K562 (cell line): ENCODE measurements at regions of chr7 and their contacts with region 1.

Region 1: GRCh38 chr7:11343818-11344413 is 370.2 kb downstream of the PHF14 start:
- DNase-seq: peak; percentile 26 to 56 (median 40)
- ATAC-seq: peak; percentile 48; the same call in 2 of the 3 replicates
- H3K4me3 ChIP-seq: no peak overlapping the region
- H3K27ac ChIP-seq: no peak overlapping the region
- H3K4me1 ChIP-seq: no peaks in the 10 kb centered on the region; a peak in 1 of 5 replicates
- H3K27me3 ChIP-seq: no peaks in the 10 kb centered on the region
- CTCF ChIP-seq: peak; percentile 48 to 82 (median 60); a peak in 4 of 6 replicates
- EP300 ChIP-seq: no peak
- POLR2A ChIP-seq: no peak
- RAD21 ChIP-seq: peak; percentile 66 to 82

Region 2: DNA sequence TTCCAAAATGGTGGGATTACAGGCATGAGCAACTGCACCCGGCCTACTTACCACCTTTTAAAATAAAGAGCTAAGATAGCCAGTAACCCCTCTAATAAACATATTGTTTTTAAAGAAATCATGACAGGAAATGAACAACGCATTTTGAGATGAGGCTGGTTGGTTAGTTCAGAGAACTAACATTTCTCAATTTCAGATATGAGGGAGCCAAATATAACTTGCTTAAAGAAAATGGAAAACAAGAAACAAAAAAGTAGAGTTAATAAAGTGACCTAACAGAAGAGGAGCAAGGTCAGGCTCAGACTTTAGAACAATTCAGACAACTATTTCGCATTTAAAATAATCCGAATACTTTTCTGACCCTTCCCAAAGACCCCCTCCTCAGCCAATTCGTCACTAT is 625.1 kb before region 1 on chr7:
- CTCF ChIA-PET with region 1: no interaction called
- POLR2A ChIA-PET with region 1: no interaction called
- in situ Hi-C with region 1: no loop called
- intact Hi-C with region 1: loop called (anchors 10 kb)
- DNase-seq: no peak
- ATAC-seq: no peak
- H3K4me3 ChIP-seq: no peak overlapping the region
- H3K27ac ChIP-seq: no peak overlapping the region
- H3K4me1 ChIP-seq: peaks cover 0 to 7% of the 10 kb centered on the region in 2 experiments; a peak in 3 of 5 replicates
- H3K27me3 ChIP-seq: no peaks in the 10 kb centered on the region
- CTCF ChIP-seq: no peak
- EP300 ChIP-seq: no peak
- POLR2A ChIP-seq: no peak
- RAD21 ChIP-seq: no peak

Region 3: DNA sequence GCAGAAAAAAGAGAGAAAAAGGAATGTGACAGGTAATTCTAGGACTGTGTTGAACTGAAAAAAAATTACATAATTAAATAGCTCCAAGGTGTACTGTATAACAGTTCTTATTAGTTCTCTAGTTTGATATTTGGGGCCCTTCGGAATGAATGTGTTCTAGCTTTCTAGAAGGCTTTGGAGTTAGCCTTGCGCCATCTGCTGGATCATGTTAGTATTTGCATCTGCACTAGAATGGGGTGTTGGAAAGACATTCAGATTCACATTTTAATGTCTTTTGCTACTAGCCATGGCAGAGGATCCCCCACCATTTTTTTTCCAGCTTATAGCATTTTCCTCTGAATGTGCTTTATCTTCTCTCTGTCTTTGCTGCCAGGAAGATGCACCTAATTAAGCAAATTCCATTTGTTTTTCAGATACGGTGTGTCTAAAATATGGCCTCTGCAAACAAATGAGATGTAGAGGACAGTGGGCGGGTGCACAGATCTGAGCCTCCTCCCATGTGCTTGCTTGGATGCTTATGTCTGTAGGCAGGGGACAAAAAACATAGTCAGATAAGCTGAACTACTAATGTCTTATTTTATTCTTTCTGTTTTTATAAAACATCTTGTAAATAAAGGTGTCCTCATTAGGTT is 131.7 kb before region 1 on chr7:
- CTCF ChIA-PET with region 1: interaction called, 3 read pairs
- POLR2A ChIA-PET with region 1: no interaction called
- in situ Hi-C with region 1: no loop called
- intact Hi-C with region 1: loop called (anchors 1 kb)
- DNase-seq: peak; percentile 43 to 76 (median 50)
- ATAC-seq: peak; percentile 91
- H3K4me3 ChIP-seq: no peak overlapping the region
- H3K27ac ChIP-seq: no peak overlapping the region
- H3K4me1 ChIP-seq: no peaks in the 10 kb centered on the region
- H3K27me3 ChIP-seq: peaks cover 11 to 15% of the 10 kb centered on the region in 2 experiments
- CTCF ChIP-seq: peak; percentile 61 to 76 (median 75)
- EP300 ChIP-seq: no peak
- POLR2A ChIP-seq: no peak
- RAD21 ChIP-seq: peak; percentile 76 to 85

Region 4: GRCh38 chr7:11237742-11238141 is 106.2 kb before region 1 on chr7:
- CTCF ChIA-PET with region 1: interaction called, 3 read pairs
- POLR2A ChIA-PET with region 1: no interaction called
- in situ Hi-C with region 1: no loop called
- intact Hi-C with region 1: loop called (anchors 5 kb)
- DNase-seq: no peak
- ATAC-seq: no peak
- H3K4me3 ChIP-seq: 0 out of 2 replicates have a peak overlapping the region, but pooled peaks have one; percentile 13
- H3K27ac ChIP-seq: no peak overlapping the region
- H3K4me1 ChIP-seq: no peaks in the 10 kb centered on the region
- H3K27me3 ChIP-seq: peaks cover 7 to 12% of the 10 kb centered on the region in 2 experiments
- CTCF ChIP-seq: no peak
- EP300 ChIP-seq: no peak
- POLR2A ChIP-seq: no peak
- RAD21 ChIP-seq: no peak